Stomach (tissue), 19 donors: ENCODE measurements at regions of chr3 and their contacts with region 1.

Region 1: DNA sequence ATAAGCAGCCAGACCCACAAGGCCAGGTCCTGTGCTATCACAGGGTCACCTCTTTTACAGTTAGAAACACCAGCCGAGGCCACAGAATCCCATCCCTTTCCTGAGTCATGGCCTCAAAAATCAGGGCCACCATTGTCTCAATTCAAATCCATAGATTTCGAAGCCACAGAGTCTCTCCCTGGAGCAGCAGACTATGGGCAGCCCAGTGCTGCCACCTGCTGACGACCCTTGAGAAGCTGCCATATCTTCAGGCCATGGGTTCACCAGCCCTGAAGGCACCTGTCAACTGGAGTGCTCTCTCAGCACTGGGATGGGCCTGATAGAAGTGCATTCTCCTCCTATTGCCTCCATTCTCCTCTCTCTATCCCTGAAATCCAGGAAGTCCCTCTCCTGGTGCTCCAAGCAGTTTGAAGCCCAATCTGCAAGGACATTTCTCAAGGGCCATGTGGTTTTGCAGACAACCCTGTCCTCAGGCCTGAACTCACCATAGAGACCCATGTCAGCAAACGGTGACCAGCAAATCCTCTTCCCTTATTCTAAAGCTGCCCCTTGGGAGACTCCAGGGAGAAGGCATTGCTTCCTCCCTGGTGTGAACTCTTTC is 39.6 kb downstream of the TGM4 start:
- DNase-seq: peak; percentile 75 to 86
- H3K4me3 ChIP-seq: no peak overlapping the region
- H3K27ac ChIP-seq: no peak overlapping the region
- H3K4me1 ChIP-seq: no peaks in the 10 kb centered on the region
- H3K27me3 ChIP-seq: peaks cover 0 to 9% (median 4%) of the 10 kb centered on the region in 3 donors
- CTCF ChIP-seq: peak in 5 of 7 experiments; percentile 55 to 75 (median 61)
- EP300 ChIP-seq: no peak
- POLR2A ChIP-seq: no peak

Region 2: GRCh38 chr3:44529927-44530326 is 384.0 kb before region 1 on chr3:
- intact Hi-C with region 1: loop called (anchors 5 kb)
- DNase-seq: no peak
- H3K4me3 ChIP-seq: no peak overlapping the region
- H3K27ac ChIP-seq: no peak overlapping the region
- H3K4me1 ChIP-seq: no peaks in the 10 kb centered on the region
- H3K27me3 ChIP-seq: peaks cover 0 to 45% (median 21%) of the 10 kb centered on the region in 3 donors
- CTCF ChIP-seq: no peak
- EP300 ChIP-seq: no peak
- POLR2A ChIP-seq: no peak

Region 3: GRCh38 chr3:45105855-45106671 is 192.1 kb after region 1 on chr3:
- intact Hi-C with region 1: no loop called
- DNase-seq: peak in 1 of 2 donors; percentile 47
- H3K4me3 ChIP-seq: no peak overlapping the region
- H3K27ac ChIP-seq: no peak overlapping the region
- H3K4me1 ChIP-seq: peaks cover 0 to 25% (median 5%) of the 10 kb centered on the region in 4 donors
- H3K27me3 ChIP-seq: no peaks in the 10 kb centered on the region
- CTCF ChIP-seq: no peak
- EP300 ChIP-seq: no peak
- POLR2A ChIP-seq: no peak